GM18951 (cell line): ENCODE measurements at regions of chr5 and their contacts with region 1.

Region 1: GRCh38 chr5:96601811-96602244 is 60.3 kb upstream of the CAST start:
- POLR2A ChIP-seq: no peak

Region 2: GRCh38 chr5:96344678-96345577 is 256.9 kb before region 1 on chr5:
- in situ Hi-C with region 1: loop called (anchors 10 kb)
- POLR2A ChIP-seq: no peak

Region 3: DNA sequence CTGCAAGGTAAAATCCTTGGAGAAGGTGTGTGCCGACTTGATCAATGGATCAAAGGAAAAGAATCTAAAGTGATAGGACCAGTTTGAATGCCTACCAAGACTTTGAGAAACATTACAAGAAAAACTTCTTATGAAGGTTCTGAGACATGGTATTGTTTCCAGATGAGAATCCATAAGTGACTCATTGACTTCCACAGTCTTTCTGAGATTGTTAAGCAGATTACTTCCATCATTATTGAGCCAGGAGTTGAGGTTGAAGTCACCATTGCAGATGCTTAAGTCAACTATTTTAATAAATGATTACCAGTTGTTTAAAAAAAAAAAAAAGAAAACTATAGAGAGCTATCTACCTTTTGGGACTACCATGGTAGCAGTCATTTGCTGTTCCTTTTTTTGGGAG is 341.1 kb after region 1 on chr5:
- in situ Hi-C with region 1: no loop called
- POLR2A ChIP-seq: no peak

Region 4: DNA sequence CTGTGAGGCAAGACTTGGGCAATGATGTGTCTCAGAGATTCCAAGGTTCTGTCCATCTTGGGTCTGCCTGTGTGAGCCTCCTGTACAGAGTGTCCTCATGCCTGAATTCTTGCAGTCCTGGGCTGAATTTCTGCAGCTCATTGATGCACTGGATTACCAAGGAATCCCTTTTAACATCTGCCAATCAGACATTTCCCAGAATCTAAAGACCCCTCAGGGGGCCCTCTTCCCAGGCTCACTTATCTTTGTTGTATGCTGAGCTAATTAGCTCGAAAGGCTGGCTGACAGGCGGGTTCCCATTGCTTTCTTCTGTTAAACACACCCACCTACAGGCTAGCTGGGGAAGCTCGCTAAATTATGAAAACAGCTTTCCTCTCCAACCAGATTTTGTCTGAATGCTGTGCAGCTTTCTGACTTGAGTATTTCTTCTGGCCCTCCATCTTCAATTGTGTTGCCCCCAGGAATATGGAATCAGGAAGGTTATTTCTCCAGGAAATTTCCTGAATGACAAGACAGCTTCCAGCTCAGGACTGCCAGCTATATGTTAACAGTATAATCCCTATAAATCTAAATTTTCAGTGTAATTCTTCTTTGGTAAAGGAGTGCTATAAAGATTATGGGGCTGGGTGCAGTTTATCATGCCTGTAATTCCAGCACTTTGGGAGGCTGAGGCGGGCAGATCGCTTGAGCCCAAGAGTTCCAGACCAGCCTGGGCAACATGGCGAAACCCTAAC is 540.9 kb after region 1 on chr5 and contains the start of gene LIX1:
- in situ Hi-C with region 1: no loop called
- POLR2A ChIP-seq: no peak

Region 5: DNA sequence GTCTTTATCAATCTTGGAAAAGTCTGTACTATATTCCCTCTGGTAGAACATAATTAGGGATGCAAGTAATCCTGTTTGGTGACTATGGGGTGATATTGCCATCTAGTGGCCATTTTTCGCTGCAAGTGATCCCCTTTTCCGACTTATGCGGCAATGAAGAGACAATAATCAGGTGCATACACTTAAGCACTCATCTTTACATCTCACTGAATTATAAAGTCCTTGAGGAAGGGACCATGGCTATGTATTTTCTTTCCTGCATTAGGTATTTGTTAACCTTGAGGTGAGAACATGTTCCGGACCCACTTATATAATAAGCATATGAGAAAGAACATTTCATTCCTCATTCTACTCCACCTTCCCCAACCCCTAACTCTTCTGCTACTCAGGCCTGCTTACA is 560.2 kb after region 1 on chr5:
- in situ Hi-C with region 1: loop called (anchors 25 kb)
- POLR2A ChIP-seq: no peak